ENCODE measurements at regions of chr18 and their contacts with region 1.

Region 1: DNA sequence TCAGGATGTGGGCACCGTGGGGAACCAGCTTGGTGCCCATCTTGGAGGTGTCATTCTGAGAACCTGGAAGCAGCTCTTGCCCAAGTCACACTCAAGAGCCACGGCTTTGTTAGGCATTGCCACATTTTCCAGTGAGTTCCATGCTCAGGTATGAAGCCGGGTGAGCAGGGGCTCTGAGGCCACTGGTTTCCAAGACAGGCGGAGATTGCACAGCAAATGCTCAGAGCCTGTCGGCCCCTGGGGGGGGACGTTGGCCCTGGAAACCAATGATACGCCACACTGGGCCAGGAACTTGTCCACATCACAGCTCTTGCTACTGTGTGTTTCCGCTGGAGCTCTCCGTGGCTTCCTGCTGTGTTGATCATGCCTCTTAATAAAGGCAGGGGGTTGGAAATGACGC is 52.5 kb upstream of the SALL3 start:
- DNase-seq: peak; percentile 45
- ATAC-seq: no peak

Region 2: GRCh38 chr18:78999937-79000336 is 72.8 kb after region 1 on chr18:
- intact Hi-C with region 1: no loop called
- DNase-seq: no peak
- ATAC-seq: no peak

Region 3: GRCh38 chr18:79139206-79139605 is 212.1 kb after region 1 on chr18:
- intact Hi-C with region 1: loop called (anchors 5 kb)
- DNase-seq: no peak
- ATAC-seq: no peak

Region 4: DNA sequence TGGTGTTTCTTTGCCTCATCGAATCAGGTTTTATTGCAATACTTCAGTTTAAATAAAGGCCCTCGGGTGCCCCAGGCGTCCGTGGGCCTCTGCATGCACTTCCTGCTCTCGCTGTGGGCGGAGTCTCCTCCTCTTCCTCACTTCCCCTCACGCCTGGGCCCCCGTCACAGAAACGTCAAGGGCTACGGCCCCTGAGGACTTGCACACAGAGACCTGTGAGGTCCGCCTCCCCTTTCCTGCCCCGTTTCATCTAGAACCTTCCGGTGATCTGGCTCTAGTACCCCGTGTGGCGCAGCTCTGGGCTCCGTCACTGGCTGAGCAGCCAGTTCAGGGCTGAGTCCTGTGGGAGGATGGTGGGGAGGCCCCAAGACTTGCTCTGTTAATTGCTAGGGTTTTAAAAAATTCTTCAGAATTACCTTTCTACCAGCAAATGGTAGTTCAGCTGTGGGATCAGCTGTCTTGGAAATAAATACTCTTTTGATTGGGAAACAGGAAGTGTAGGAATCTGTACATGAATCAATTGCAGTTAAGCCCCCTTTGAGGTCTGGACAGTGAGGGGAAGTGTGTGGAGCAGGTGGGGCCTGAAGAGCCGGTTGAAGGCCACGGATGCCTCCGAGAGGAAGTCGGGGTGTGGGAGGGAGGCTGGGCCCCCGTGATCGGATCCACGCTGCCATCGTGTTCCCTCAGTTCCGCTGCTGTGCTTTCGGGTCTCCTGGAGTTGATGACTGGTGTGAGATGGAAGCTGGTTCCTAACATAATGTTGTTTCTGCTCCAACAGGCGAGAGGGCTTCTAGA is 478.8 kb after region 1 on chr18:
- intact Hi-C with region 1: no loop called
- DNase-seq: peak; percentile 85
- ATAC-seq: peak; percentile 50